GM12878 (cell line): ENCODE measurements at regions of chr3 and their contacts with region 1.

Region 1: DNA sequence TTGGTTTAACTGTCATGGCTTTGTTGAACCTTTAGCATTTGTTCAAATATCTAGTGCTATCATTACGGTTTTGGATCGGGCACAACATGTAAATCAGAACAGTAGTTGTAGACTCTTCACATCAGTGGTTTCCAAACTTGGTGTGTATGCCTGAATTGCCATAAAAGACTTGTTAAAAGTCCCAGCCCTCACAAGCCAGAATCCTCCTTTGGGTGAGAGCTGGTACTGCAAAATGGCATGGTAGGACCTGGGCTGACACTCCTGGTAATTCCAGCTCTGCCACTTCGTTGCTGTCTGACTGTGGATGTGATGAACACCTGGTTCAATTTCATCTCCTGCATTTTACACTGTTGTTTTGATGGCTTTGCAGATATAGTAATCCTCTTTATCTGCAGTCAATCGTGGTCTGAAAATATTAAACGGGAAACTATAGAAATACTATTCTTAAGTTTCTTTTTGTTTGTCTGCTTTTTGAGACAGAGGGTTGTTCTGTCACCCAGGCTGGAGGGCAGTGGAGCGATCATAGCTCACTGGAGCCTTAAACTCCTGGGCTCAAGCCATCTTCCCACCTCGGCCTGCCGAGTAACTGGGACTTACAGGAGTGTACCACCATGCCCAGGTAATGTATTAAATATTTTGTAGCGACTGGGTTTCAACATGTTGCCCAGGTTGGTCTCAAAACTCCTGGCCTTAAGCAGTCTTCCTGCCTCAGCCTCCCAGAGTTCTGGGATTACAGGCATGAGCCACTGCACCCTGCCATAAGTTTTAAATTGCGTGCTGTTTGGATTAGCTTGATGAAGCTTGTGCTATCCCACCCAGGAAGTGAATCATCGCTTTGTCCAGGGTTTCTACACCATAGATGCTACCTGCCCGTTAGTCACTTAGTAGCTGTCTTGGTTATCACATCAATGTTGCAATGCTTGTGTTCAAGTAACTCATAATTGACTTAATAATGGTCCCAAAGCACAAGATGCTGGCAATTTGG is 61.6 kb downstream of the RAB7A start:
- DNase-seq: no peak
- ATAC-seq: peak; percentile 87
- H3K4me3 ChIP-seq: peak overlapping the region; percentile 57; the same call in 1 of the 2 replicates
- H3K27ac ChIP-seq: peak overlapping the region; percentile 24
- H3K4me1 ChIP-seq: peaks cover 55% of the 10 kb centered on the region
- H3K27me3 ChIP-seq: no peaks in the 10 kb centered on the region
- CTCF ChIP-seq: peak; percentile 26 to 59 (median 59); a peak in 5 of 6 replicates
- EP300 ChIP-seq: no peak
- POLR2A ChIP-seq: no peak
- RAD21 ChIP-seq: peak; percentile 36; the same call in 1 of the 2 replicates

Region 2: DNA sequence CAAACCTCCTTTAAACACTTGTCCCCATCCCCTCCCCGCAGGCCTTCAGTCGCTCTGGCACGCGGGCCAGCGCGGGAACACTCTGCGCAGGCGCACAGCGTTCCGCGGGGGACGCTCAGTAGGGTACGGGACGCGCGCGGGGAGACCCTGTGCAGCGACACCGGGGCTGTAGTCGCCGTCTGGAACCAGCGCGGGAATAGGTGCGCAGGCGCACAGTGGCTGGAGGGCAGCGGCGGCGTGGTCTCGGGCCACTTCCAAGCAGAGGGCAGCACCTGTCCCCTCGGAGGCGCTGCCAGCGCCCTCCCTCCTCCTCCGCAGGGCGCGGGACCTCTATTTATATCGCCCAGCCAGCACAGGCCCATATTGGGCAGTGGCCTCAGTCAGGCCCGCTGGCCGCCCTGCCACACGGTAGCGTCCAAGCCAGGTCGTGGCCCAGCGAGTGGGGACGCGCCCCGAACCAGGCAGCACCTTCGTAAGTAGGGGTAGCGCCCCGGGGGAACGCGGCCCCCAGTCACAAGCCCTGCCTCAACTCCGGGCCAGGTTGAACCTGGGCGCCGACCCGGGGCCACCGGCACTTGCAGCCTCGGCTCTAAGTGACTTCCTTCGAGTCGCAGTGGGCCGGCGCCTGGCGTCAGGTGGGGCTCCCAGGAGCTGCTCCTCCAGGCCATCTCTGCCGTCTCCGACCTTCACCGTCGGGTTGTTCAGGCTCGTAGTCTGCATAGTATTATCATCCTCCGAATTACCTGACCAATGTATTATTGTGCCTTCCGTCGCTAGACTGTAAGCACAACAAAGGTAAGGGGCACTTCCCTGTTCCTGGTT is 872.2 kb before region 1 on chr3 and contains the start of gene KBTBD12:
- CTCF ChIA-PET with region 1: no interaction called
- POLR2A ChIA-PET with region 1: no interaction called
- RAD21 ChIA-PET with region 1: no interaction called
- SMC1A ChIA-PET with region 1: no interaction called
- in situ Hi-C with region 1: no loop called
- intact Hi-C with region 1: no loop called
- DNase-seq: no peak
- ATAC-seq: no peak
- H3K4me3 ChIP-seq: no peak within 1 kb of the TSS
- H3K27ac ChIP-seq: no peak within 1 kb of the TSS
- H3K4me1 ChIP-seq: no peaks in the 10 kb centered on the region
- H3K27me3 ChIP-seq: no peaks in the 10 kb centered on the region
- CTCF ChIP-seq: no peak
- EP300 ChIP-seq: no peak
- POLR2A ChIP-seq: no peak
- RAD21 ChIP-seq: no peak
- polyA plus RNA-seq, gene KBTBD12: not detected

Region 3: GRCh38 chr3:128623762-128624176 is 163.8 kb before region 1 on chr3:
- CTCF ChIA-PET with region 1: no interaction called
- POLR2A ChIA-PET with region 1: no interaction called
- RAD21 ChIA-PET with region 1: no interaction called
- SMC1A ChIA-PET with region 1: no interaction called
- in situ Hi-C with region 1: no loop called
- intact Hi-C with region 1: no loop called
- DNase-seq: no peak
- ATAC-seq: no peak
- H3K4me3 ChIP-seq: no peak overlapping the region
- H3K27ac ChIP-seq: no peak overlapping the region
- H3K4me1 ChIP-seq: peaks cover 5% of the 10 kb centered on the region
- H3K27me3 ChIP-seq: no peaks in the 10 kb centered on the region
- CTCF ChIP-seq: no peak
- EP300 ChIP-seq: no peak
- POLR2A ChIP-seq: no peak
- RAD21 ChIP-seq: no peak

Region 4: DNA sequence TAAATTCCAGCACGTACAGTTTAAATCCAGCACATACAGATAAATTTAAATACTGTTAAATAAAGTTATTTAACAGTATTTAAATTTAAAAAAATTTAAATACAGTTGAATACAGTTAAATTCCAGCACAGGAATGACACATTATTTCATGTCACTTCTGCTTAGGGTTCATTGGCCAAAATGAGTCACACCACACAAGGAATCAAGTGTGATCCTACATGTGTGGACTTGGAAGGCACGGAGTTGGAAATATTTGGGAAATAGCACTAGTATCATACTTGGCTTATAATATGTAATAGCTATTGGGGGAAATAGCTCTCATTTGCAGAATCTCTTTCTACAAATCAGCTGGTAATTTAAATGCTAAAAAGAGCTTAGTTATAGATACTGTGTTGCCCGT is 50.9 kb before region 1 on chr3:
- CTCF ChIA-PET with region 1: interaction called, 3 read pairs
- POLR2A ChIA-PET with region 1: interaction called, 3 read pairs
- RAD21 ChIA-PET with region 1: no interaction called
- SMC1A ChIA-PET with region 1: interaction called, 20 read pairs
- in situ Hi-C with region 1: no loop called
- intact Hi-C with region 1: loop called (anchors 5 kb)
- DNase-seq: no peak
- ATAC-seq: no peak
- H3K4me3 ChIP-seq: no peak overlapping the region
- H3K27ac ChIP-seq: no peak overlapping the region
- H3K4me1 ChIP-seq: peaks cover 8% of the 10 kb centered on the region
- H3K27me3 ChIP-seq: no peaks in the 10 kb centered on the region
- CTCF ChIP-seq: no peak
- EP300 ChIP-seq: no peak
- POLR2A ChIP-seq: no peak
- RAD21 ChIP-seq: no peak

Region 5: GRCh38 chr3:128804017-128804810 is 16.7 kb after region 1 on chr3:
- CTCF ChIA-PET with region 1: interaction called, 10 read pairs
- POLR2A ChIA-PET with region 1: interaction called, 11 read pairs
- RAD21 ChIA-PET with region 1: interaction called, 7 read pairs
- SMC1A ChIA-PET with region 1: interaction called, 23 read pairs
- in situ Hi-C with region 1: no loop called
- intact Hi-C with region 1: no loop called
- DNase-seq: peak; percentile 83
- ATAC-seq: peak; percentile 97
- H3K4me3 ChIP-seq: no peak overlapping the region
- H3K27ac ChIP-seq: peak overlapping the region; percentile 49
- H3K4me1 ChIP-seq: peaks cover 33% of the 10 kb centered on the region
- H3K27me3 ChIP-seq: no peaks in the 10 kb centered on the region
- CTCF ChIP-seq: no peak
- EP300 ChIP-seq: peak; percentile 12 to 55; a peak in 3 of 4 replicates
- POLR2A ChIP-seq: no peak
- RAD21 ChIP-seq: no peak